Ascending aorta (tissue), 2 donors: ENCODE measurements at regions of chr3 and their contacts with region 1.

Region 1: DNA sequence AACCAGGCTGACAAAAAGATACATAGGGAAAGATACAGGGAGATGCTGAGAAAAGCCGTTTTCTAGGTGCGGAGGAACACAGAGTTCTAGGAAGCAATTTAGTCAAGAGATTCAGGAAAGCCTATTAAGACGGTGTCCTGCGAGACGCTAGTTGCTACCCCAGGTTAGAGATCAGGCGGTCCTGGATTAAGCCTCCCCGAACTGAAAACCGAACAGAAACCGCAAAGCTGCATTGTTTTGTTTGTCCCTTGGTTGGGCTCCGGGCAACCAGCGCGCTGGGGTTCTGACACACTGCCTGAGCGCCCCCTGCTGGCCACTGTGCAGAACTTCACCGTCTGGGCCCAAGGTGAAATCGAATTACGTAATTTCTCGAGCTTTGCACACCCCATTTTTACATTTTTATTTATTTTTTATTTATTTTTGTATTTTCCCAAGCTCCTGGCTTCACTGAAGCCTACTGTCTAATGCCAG is 37.3 kb upstream of the NDUFB4 start:
- DNase-seq: peak; percentile 62 to 93
- H3K4me3 ChIP-seq: peak overlapping the region; percentile 42 to 66
- H3K27ac ChIP-seq: peak overlapping the region; percentile 67 to 89
- H3K4me1 ChIP-seq: peaks cover 15 to 25% of the 10 kb centered on the region in 2 donors
- H3K27me3 ChIP-seq: no peaks in the 10 kb centered on the region
- CTCF ChIP-seq: peak; percentile 92 to 98 (median 97)

Region 2: GRCh38 chr3:119891944-119892721 is 666.7 kb before region 1 on chr3:
- intact Hi-C with region 1: loop called (anchors 10 kb)
- DNase-seq: no peak
- H3K4me3 ChIP-seq: no peak overlapping the region
- H3K27ac ChIP-seq: no peak overlapping the region
- H3K4me1 ChIP-seq: no peaks in the 10 kb centered on the region
- H3K27me3 ChIP-seq: no peaks in the 10 kb centered on the region
- CTCF ChIP-seq: peak; percentile 65 to 81 (median 66)

Region 3: GRCh38 chr3:120245386-120245785 is 313.4 kb before region 1 on chr3:
- intact Hi-C with region 1: loop called (anchors 1 kb)
- DNase-seq: no peak
- H3K4me3 ChIP-seq: no peak overlapping the region
- H3K27ac ChIP-seq: no peak overlapping the region
- H3K4me1 ChIP-seq: no peaks in the 10 kb centered on the region
- H3K27me3 ChIP-seq: no peaks in the 10 kb centered on the region
- CTCF ChIP-seq: no peak

Region 4: GRCh38 chr3:120348981-120349818 is 209.6 kb before region 1 on chr3 and contains the start of gene LRRC58:
- intact Hi-C with region 1: loop called (anchors 1 kb)
- DNase-seq: peak; percentile 42 to 94
- H3K4me3 ChIP-seq: peak within 1 kb of the TSS; percentile 89 to 96
- H3K27ac ChIP-seq: peak within 1 kb of the TSS; percentile 92 to 94
- H3K4me1 ChIP-seq: peaks cover 0 to 14% of the 10 kb centered on the region in 2 donors
- H3K27me3 ChIP-seq: no peaks in the 10 kb centered on the region
- CTCF ChIP-seq: peak in 1 of 3 experiments; percentile 23
- total RNA-seq, gene LRRC58: 14.7 TPM

Region 5: GRCh38 chr3:120498556-120499346 is 60.1 kb before region 1 on chr3:
- intact Hi-C with region 1: loop called (anchors 2 kb)
- DNase-seq: no peak
- H3K4me3 ChIP-seq: no peak overlapping the region
- H3K27ac ChIP-seq: peak overlapping the region in 1 of 2 donors; percentile 50
- H3K4me1 ChIP-seq: peaks cover 7 to 26% of the 10 kb centered on the region in 2 donors
- H3K27me3 ChIP-seq: no peaks in the 10 kb centered on the region
- CTCF ChIP-seq: no peak

Region 6: DNA sequence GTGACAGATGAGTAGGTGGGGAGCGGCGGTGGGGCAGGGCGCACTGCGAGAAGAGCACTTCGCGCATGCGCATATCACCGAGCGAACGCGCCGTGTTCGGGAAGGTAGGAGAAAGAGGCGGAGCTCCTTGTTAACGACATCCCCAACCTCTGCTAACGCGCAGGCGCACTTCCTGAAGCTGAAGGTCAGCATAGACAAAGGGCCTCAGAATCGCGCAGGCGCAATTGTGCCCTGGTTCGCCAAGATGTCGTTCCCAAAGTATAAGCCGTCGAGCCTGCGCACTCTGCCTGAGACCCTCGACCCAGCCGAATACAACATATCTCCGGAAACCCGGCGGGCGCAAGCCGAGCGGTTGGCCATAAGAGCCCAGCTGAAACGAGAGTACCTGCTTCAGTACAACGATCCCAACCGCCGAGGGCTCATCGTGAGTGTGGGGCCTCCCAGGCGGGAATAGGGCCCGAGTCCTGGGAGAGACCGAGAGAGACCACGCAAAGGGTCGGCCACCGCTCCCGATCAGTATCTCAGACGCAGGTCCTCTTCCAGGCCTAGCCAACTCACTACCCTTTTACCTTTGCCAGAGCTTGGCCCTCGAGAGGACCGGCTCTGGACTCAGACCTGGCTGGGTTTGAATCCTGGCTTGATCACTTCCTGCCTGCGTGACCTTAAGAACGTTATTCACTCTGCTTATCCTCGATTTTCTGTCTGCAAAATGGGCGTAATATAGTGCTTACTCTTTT is 37.5 kb after region 1 on chr3 and contains the start of gene NDUFB4:
- intact Hi-C with region 1: loop called (anchors 1 kb)
- DNase-seq: peak; percentile 87 to 98
- H3K4me3 ChIP-seq: peak within 1 kb of the TSS; percentile 68 to 87
- H3K27ac ChIP-seq: peak within 1 kb of the TSS; percentile 73 to 86
- H3K4me1 ChIP-seq: peaks cover 6 to 28% of the 10 kb centered on the region in 2 donors
- H3K27me3 ChIP-seq: no peaks in the 10 kb centered on the region
- CTCF ChIP-seq: no peak
- total RNA-seq, gene NDUFB4: 37.0 TPM

Region 7: GRCh38 chr3:120708408-120708807 is 149.6 kb after region 1 on chr3:
- intact Hi-C with region 1: no loop called
- DNase-seq: no peak
- H3K4me3 ChIP-seq: no peak overlapping the region
- H3K27ac ChIP-seq: no peak overlapping the region
- H3K4me1 ChIP-seq: no peaks in the 10 kb centered on the region
- H3K27me3 ChIP-seq: no peaks in the 10 kb centered on the region
- CTCF ChIP-seq: no peak

Region 8: DNA sequence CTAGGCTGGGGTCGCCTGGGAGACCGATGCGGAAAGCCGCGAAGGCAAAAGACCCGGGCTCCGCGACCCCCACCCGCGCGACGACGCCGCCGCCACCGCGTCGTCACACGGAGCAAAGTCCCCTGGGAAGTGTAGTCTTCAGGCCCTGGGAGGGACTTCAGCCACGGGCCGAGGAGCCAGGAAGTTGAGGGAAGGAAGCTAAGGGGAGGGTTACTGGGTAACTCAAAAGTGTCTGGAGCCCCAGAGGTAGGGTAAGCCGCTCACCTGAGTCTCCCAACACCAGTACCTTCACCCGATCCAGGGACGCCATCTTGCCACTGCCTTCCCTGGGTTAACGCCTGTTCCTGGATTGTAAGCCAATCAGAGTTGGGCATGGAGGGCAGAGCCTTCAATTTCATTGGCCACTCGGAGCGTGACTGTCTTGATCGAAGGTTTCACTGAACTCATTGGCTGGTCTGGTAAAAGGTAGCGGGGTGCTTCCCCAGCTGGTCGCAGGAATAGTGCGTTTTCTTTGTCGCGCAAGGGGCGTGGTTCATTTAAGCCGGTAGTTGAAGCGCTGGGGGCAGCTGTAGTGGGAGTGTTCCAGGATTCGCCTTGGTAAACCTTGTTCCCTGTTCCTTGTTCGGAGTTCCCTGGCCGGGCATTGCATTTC is 183.5 kb after region 1 on chr3 and contains the starts of genes GTF2E1 and RABL3:
- intact Hi-C with region 1: loop called (anchors 10 kb)
- DNase-seq: peak; percentile 96 to 99
- H3K4me3 ChIP-seq: peak within 1 kb of the TSS; percentile 87 to 97
- H3K27ac ChIP-seq: peak within 1 kb of the TSS; percentile 92 to 93
- H3K4me1 ChIP-seq: peaks cover 4 to 9% of the 10 kb centered on the region in 2 donors
- H3K27me3 ChIP-seq: no peaks in the 10 kb centered on the region
- CTCF ChIP-seq: no peak
- total RNA-seq, gene GTF2E1: 4.4 TPM
- total RNA-seq, gene RABL3: 3.0 TPM